IMR-90 (cell line): ENCODE measurements at regions of chr6 and their contacts with region 1.

Region 1: DNA sequence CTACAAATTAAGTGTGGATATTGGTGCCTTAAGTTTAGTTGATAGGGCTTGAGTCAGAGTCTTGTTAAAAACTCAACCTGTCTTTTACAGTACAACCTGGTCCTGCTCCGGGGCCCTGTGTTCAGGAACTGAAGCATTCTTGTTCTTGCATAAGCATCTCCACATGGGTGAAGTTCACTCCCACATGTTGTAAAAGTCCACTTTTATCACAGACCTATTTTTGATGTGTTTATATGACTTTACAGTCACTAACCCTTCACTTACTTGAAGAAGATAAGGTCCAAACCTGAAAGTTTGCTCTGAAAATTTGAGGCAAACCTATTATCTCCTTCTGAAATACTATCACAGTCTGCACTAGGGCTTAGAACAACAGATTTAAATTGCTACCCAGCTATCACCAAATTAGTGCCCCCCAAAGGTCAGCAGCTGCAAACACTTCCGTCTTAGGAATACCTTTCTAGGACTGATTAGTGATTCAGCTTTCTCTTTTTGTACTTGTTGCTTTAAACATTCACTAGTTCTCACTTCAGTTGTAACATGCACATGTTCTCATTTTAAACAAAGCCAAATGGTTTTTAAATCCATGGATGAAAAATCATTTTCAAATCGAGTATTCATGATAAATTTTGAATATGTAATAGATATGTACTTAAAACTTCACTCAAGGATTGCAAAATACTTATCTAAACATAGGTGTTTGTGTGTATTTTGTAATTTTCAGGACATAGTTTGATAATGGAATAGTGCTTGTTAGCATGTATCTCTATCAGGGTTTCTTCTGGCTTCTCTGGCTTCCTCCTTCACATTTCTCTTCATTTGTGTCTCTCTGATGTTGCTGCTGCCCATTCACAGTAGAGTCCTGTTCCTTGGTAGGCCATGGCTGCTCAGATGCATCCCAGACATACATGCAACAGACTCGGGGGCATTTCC is 469.8 kb upstream of the SOX4 start:
- DNase-seq: no peak
- ATAC-seq: no peak
- H3K4me3 ChIP-seq: no peak overlapping the region
- H3K27ac ChIP-seq: no peak overlapping the region
- H3K4me1 ChIP-seq: no peaks in the 10 kb centered on the region
- H3K27me3 ChIP-seq: no peaks in the 10 kb centered on the region
- CTCF ChIP-seq: no peak
- POLR2A ChIP-seq: no peak
- RAD21 ChIP-seq: no peak

Region 2: GRCh38 chr6:21037453-21037852 is 86.3 kb before region 1 on chr6:
- CTCF ChIA-PET with region 1: no interaction called
- POLR2A ChIA-PET with region 1: no interaction called
- dilution Hi-C with region 1: no loop called
- in situ Hi-C with region 1: no loop called
- intact Hi-C with region 1: loop called (anchors 5 kb)
- DNase-seq: no peak
- ATAC-seq: no peak
- H3K4me3 ChIP-seq: no peak overlapping the region
- H3K27ac ChIP-seq: no peak overlapping the region
- H3K4me1 ChIP-seq: peaks cover 5% of the 10 kb centered on the region; the same call in 1 of the 2 replicates
- H3K27me3 ChIP-seq: no peaks in the 10 kb centered on the region
- CTCF ChIP-seq: no peak
- POLR2A ChIP-seq: no peak
- RAD21 ChIP-seq: no peak

Region 3: GRCh38 chr6:21084656-21085055 is 39.1 kb before region 1 on chr6:
- CTCF ChIA-PET with region 1: no interaction called
- POLR2A ChIA-PET with region 1: no interaction called
- dilution Hi-C with region 1: no loop called
- in situ Hi-C with region 1: no loop called
- intact Hi-C with region 1: no loop called
- DNase-seq: no peak
- ATAC-seq: no peak
- H3K4me3 ChIP-seq: no peak overlapping the region
- H3K27ac ChIP-seq: no peak overlapping the region
- H3K4me1 ChIP-seq: no peaks in the 10 kb centered on the region
- H3K27me3 ChIP-seq: no peaks in the 10 kb centered on the region
- CTCF ChIP-seq: no peak
- POLR2A ChIP-seq: no peak
- RAD21 ChIP-seq: no peak